ENCODE measurements at regions of chr19 and their contacts with region 1.

Region 1: DNA sequence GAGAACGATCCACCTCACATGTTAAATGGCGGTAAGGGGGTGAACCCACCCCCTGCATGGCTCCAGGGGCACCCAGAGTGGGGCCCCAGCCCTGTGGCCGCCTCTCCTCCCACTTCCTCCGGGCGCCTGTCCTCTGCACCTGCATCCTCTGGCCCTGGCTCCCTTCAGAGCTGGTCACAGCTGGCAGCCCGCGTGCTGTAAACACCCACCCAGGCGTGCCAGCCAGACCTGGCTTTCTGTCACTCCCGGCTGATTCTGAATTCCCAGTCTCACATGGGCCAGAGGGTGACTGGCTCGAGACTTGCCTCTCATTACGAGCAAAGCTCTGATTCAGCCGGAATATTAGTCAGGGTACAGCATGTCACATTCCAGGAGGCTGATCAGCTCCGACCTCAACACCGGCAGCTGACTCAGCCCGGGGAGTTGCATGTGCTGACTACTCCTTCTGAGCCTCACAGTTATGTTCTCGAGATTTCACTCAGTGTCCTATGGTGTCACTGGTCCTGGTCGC is 75.1 kb downstream of the GNG7 start:
- DNase-seq: peak; percentile 68
- ATAC-seq: peak; percentile 62
- H3K4me3 Mint-ChIP-seq: peak overlapping the region; percentile 76
- H3K27ac Mint-ChIP-seq: peak overlapping the region; percentile 94
- H3K4me1 Mint-ChIP-seq: peaks cover 95% of the 10 kb centered on the region
- H3K27me3 Mint-ChIP-seq: no peaks in the 10 kb centered on the region
- CTCF ChIP-seq: no peak

Region 2: DNA sequence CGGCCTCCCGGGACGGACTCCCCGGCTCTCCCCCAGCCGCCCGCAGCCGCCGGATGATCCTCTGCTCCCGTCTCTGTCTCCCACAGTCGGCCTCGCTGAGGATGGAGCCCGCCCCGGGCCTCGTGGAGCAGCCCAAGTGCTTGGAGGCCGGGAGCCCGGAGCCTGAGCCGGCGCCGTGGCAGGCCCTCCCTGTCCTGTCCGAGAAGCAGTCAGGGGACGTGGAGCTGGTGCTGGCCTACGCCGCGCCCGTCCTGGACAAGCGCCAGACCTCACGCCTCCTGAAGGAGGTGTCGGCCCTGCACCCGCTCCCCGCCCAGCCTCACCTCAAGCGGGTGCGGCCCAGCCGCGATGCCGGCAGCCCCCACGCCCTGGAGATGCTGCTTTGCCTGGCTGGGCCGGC is 715.4 kb before region 1 on chr19:
- CTCF ChIA-PET with region 1: no interaction called
- POLR2A ChIA-PET with region 1: no interaction called
- intact Hi-C with region 1: no loop called
- DNase-seq: no peak
- ATAC-seq: no peak
- H3K4me3 Mint-ChIP-seq: no peak overlapping the region
- H3K27ac Mint-ChIP-seq: no peak overlapping the region
- H3K4me1 Mint-ChIP-seq: peaks cover 30% of the 10 kb centered on the region
- H3K27me3 Mint-ChIP-seq: no peaks in the 10 kb centered on the region
- CTCF ChIP-seq: no peak

Region 3: GRCh38 chr19:2602391-2603181 is 24.8 kb before region 1 on chr19:
- CTCF ChIA-PET with region 1: interaction called, 336 read pairs
- POLR2A ChIA-PET with region 1: interaction called, 582 read pairs
- intact Hi-C with region 1: no loop called
- DNase-seq: no peak
- ATAC-seq: no peak
- H3K4me3 Mint-ChIP-seq: no peak overlapping the region
- H3K27ac Mint-ChIP-seq: no peak overlapping the region
- H3K4me1 Mint-ChIP-seq: peaks cover 56% of the 10 kb centered on the region
- H3K27me3 Mint-ChIP-seq: no peaks in the 10 kb centered on the region
- CTCF ChIP-seq: no peak

Region 4: GRCh38 chr19:3004522-3004921 is 377.1 kb after region 1 on chr19:
- CTCF ChIA-PET with region 1: no interaction called
- POLR2A ChIA-PET with region 1: interaction called, 12 read pairs
- intact Hi-C with region 1: no loop called
- DNase-seq: no peak
- ATAC-seq: no peak
- H3K4me3 Mint-ChIP-seq: no peak overlapping the region
- H3K27ac Mint-ChIP-seq: no peak overlapping the region
- H3K4me1 Mint-ChIP-seq: no peaks in the 10 kb centered on the region
- H3K27me3 Mint-ChIP-seq: peaks cover 4% of the 10 kb centered on the region
- CTCF ChIP-seq: no peak